ENCODE measurements at regions of chr14 and their contacts with region 1.

Region 1: DNA sequence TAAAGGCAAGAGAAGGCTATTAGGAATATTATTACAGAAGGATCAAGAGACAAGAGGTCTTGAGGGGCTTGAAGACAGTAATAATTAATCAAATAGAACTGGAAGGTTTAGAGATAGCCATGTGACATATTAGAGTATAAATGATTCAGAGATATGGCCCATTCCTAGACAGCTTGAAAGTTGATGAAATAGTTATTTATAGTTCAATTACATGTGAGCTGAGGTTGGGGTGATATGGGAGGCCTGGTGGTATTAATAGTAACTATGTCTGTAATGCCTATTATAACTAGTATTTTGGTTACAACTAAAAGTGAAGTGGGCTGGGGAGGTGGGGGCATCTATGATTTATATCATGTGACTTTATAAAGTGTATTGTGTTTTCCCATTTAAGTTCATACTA is 14.1 kb upstream of the MIS18BP1 start:
- DNase-seq: no peak

Region 2: GRCh38 chr14:44912041-44912869 is 354.8 kb before region 1 on chr14:
- CTCF ChIA-PET with region 1: interaction called, 20 read pairs
- POLR2A ChIA-PET with region 1: no interaction called
- DNase-seq: no peak

Region 3: DNA sequence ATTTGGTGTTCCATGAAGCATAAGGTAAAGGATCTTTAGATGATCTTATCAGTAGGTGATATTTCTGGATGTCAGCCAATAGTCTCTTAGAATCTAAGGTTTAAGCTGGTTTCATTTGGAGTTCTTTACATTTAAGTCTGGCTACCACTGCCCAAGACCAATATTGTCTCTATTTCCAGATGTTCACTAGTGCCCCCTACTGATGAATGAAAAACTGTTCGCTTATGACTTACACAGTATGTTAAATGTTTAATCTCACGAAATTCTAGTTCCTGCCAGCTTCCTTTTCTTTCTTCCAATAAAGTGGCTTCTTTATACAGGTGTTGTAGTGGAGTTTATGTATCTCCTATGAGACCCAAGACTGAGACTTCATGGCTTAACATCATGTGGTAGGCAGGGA is 17.7 kb after region 1 on chr14:
- CTCF ChIA-PET with region 1: no interaction called
- POLR2A ChIA-PET with region 1: no interaction called
- DNase-seq: no peak

Region 4: GRCh38 chr14:45308745-45309397 is 41.8 kb after region 1 on chr14:
- CTCF ChIA-PET with region 1: no interaction called
- POLR2A ChIA-PET with region 1: no interaction called
- DNase-seq: no peak

Region 5: GRCh38 chr14:45332360-45332988 is 65.4 kb after region 1 on chr14:
- CTCF ChIA-PET with region 1: no interaction called
- POLR2A ChIA-PET with region 1: no interaction called
- DNase-seq: no peak

Measured in HEK293T (cell line).